H1 (cell line): ENCODE measurements at regions of chr14 and their contacts with region 1.

Region 1: GRCh38 chr14:94129111-94129757 is at the start of gene IFI27L2:
- DNase-seq: peak; percentile 47 to 79
- H3K4me3 ChIP-seq: peak within 1 kb of the TSS; percentile 54 to 65 (median 62)
- H3K27ac ChIP-seq: no peak within 1 kb of the TSS
- H3K4me1 ChIP-seq: peaks cover 0 to 4% (median 2%) of the 10 kb centered on the region in 4 experiments; a peak in 3 of 7 replicates
- H3K27me3 ChIP-seq: no peaks in the 10 kb centered on the region; a peak in 1 of 7 replicates
- CTCF ChIP-seq: peak in 2 of 3 experiments; percentile 17 to 42; a peak in 3 of 4 replicates
- EP300 ChIP-seq: no peak
- POLR2A ChIP-seq: 0 out of 3 replicates have a peak, but pooled peaks of 1 of the 2 experiments have one; percentile 23
- RAD21 ChIP-seq: 0 out of 4 replicates have a peak, but pooled peaks of 1 of the 2 experiments have one; percentile 9
- total RNA-seq, gene IFI27L2: 14.0 and 19.8 TPM in 2 replicates

Region 2: DNA sequence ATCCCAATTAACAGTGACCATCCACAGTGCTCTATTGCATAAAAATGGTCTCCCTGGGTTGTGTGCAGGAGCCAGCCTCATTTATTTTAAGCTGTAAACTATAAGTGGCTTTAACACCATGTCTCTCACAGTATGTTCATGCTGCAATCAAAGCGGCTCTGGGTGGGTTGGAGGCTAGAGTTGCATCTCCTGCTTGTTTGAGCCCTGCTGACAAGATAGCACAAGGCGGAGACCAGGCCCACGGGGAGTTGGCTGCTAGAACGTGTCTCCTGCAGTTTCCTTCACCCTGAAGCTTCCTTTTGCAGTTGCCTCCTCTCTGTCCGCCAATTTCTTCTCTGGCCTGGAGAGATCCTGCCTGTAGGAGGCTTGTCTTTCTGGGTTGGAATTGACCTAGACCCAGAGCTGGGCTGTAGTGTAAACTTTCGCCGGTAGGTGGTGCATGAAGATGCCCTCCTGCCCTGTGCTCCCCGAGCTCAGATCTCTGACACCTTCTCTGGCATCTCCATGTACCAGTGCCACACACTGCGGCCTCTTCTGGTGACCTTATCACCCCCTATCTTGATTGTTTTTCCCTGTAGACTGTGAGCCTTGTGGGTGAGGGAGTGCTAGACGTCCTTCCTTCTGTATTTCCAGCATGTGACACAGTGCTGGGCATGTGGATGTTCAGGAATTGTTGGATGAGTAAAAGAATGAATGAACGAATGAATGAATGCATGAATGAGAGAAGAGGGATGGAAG is 92.8 kb before region 1 on chr14:
- CTCF ChIA-PET with region 1: interaction called, 20 read pairs
- POLR2A ChIA-PET with region 1: no interaction called
- DNase-seq: peak; percentile 60 to 91
- H3K4me3 ChIP-seq: no peak overlapping the region
- H3K27ac ChIP-seq: no peak overlapping the region
- H3K4me1 ChIP-seq: peaks cover 0 to 9% (median 0%) of the 10 kb centered on the region in 4 experiments; a peak in 2 of 7 replicates
- H3K27me3 ChIP-seq: no peaks in the 10 kb centered on the region
- CTCF ChIP-seq: peak; percentile 81 to 97 (median 97)
- EP300 ChIP-seq: no peak
- POLR2A ChIP-seq: no peak
- RAD21 ChIP-seq: peak; percentile 64 to 72

Region 3: GRCh38 chr14:94110552-94111181 is 18.6 kb before region 1 on chr14 and contains the start of gene IFI27:
- CTCF ChIA-PET with region 1: interaction called, 15 read pairs
- POLR2A ChIA-PET with region 1: interaction called, 11 read pairs
- DNase-seq: no peak
- H3K4me3 ChIP-seq: no peak within 1 kb of the TSS
- H3K27ac ChIP-seq: no peak within 1 kb of the TSS
- H3K4me1 ChIP-seq: peaks cover 0 to 5% (median under 1%) of the 10 kb centered on the region in 4 experiments; a peak in 2 of 7 replicates
- H3K27me3 ChIP-seq: no peaks in the 10 kb centered on the region
- CTCF ChIP-seq: no peak
- EP300 ChIP-seq: no peak
- POLR2A ChIP-seq: no peak
- RAD21 ChIP-seq: no peak
- total RNA-seq, gene IFI27: 0.76 and 1.0 TPM in 2 replicates

Region 4: GRCh38 chr14:94180655-94181271 is 51.5 kb after region 1 on chr14:
- CTCF ChIA-PET with region 1: interaction called, 23 read pairs
- POLR2A ChIA-PET with region 1: interaction called, 4 read pairs
- DNase-seq: no peak
- H3K4me3 ChIP-seq: no peak overlapping the region
- H3K27ac ChIP-seq: no peak overlapping the region
- H3K4me1 ChIP-seq: peaks cover 0 to 6% (median 3%) of the 10 kb centered on the region in 4 experiments; a peak in 5 of 7 replicates
- H3K27me3 ChIP-seq: peaks cover 0 to 2% (median 0%) of the 10 kb centered on the region in 4 experiments; a peak in 1 of 7 replicates
- CTCF ChIP-seq: peak in 2 of 3 experiments; percentile 35; a peak in 2 of 4 replicates
- EP300 ChIP-seq: no peak
- POLR2A ChIP-seq: no peak
- RAD21 ChIP-seq: peak; percentile 55 to 59

Region 5: DNA sequence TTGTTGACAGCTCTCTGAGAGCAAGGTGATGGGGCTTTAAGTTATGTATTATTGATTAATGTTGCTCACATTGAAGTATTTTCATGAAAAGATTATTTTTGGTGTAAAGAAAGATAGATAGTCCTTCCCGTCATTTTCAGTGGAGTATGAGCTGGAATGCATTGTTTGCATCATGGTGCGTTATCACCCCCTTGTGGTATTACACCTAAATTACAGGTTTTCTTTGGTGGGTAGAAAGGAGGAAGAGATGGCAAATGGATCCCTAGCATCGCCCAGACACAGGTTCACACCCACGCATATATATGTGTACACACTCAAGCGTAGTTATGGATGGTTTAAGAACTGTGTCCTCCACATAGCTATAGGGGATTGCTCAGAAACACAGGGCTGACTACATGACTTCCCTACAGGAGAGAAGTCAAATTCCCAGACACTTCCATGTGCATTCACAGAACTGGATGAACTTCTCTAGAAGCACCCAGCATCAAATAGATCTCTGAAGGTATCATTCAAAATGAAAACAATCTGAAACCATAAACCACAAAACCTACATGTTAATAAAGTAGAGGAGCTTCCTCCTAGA is 178.3 kb after region 1 on chr14:
- CTCF ChIA-PET with region 1: interaction called, 22 read pairs
- POLR2A ChIA-PET with region 1: no interaction called
- DNase-seq: peak in 1 of 2 experiments; percentile 44
- H3K4me3 ChIP-seq: no peak overlapping the region
- H3K27ac ChIP-seq: no peak overlapping the region
- H3K4me1 ChIP-seq: no peaks in the 10 kb centered on the region
- H3K27me3 ChIP-seq: no peaks in the 10 kb centered on the region
- CTCF ChIP-seq: peak in 2 of 3 experiments; percentile 60 to 76; a peak in 3 of 4 replicates
- EP300 ChIP-seq: no peak
- POLR2A ChIP-seq: no peak
- RAD21 ChIP-seq: peak; percentile 83 to 84